Activated T-helper 2 cell treated with anti-CD3 and anti-CD28 coated beads, Interferon-gamma antibody, Interleukin-2, Interleukin-4, amounts not matched to agents 10 μg/mL and 5 μg/mL and 100 μg/mL, durations not matched to agents 14 hours and 24 hours and 36 hours (primary cell): ENCODE measurements at regions of chr5 and their contacts with region 1.

Region 1: DNA sequence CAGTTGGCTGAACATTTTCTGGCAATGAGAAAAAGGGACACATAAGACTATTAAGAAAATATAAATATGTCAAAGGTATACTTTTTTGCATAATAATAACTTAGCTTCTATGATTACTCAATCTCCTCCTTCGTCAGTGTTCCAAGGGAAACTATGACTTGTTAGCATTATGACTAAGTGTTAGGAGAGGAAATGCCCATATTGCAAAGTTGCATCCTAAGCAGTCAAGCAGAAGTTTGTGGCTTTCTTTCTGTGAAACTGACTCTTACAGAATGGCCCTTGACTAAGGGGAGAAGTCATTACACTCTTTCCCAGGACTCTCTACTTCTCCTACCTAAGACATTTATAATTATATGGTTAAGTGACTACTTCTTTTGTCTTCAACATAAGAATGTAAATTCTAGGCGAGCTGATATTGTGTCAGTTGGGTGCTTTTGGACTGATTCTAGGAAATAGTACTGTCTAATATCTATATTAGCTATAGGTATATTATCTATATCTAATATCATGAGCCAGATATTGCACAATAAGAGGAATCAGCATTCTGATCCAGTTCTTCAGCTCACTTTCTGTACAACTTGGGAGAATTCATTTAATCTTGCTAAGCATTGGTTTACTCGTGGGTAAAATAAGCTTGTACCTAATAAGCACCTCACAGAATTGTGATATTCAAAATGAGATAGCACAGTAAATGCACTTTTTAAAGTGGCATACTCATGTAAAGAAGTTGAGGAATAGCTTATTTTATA is 16.4 kb upstream of the SPINK6 start:
- DNase-seq: no peak
- H3K4me3 Mint-ChIP-seq: no peak overlapping the region
- H3K27ac Mint-ChIP-seq: no peak overlapping the region
- H3K4me1 Mint-ChIP-seq: peaks cover 11% of the 10 kb centered on the region
- H3K27me3 Mint-ChIP-seq: peaks cover 3% of the 10 kb centered on the region

Region 2: GRCh38 chr5:147617191-147617606 is 569.2 kb before region 1 on chr5:
- intact Hi-C with region 1: no loop called
- DNase-seq: no peak
- H3K4me3 Mint-ChIP-seq: no peak overlapping the region
- H3K27ac Mint-ChIP-seq: no peak overlapping the region
- H3K4me1 Mint-ChIP-seq: no peaks in the 10 kb centered on the region
- H3K27me3 Mint-ChIP-seq: no peaks in the 10 kb centered on the region

Region 3: DNA sequence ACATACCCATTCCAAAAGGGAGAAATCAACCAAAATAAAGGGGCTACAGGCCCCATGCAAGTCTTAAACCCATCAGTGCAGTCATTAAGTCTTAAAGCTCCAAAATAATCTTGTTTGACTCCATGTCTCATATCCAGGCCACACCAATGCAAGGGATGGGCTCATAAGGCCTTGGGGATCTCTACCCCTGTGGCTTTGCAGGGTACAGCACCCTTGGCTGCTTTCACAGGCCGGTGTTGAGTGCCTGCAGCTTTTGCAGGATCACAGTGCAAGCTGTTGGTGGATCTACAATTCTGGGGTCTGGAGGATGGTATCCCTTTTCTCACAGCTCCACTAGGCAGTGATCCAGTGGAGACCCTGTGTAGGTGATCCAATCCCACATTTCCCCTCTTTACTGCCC is 23.1 kb before region 1 on chr5:
- intact Hi-C with region 1: no loop called
- DNase-seq: no peak
- H3K4me3 Mint-ChIP-seq: no peak overlapping the region
- H3K27ac Mint-ChIP-seq: no peak overlapping the region
- H3K4me1 Mint-ChIP-seq: no peaks in the 10 kb centered on the region
- H3K27me3 Mint-ChIP-seq: peaks cover 2% of the 10 kb centered on the region

Region 4: GRCh38 chr5:148708854-148709253 is 522.4 kb after region 1 on chr5:
- intact Hi-C with region 1: loop called (anchors 1 kb)
- DNase-seq: no peak
- H3K4me3 Mint-ChIP-seq: no peak overlapping the region
- H3K27ac Mint-ChIP-seq: peak overlapping the region; percentile 68
- H3K4me1 Mint-ChIP-seq: peaks cover 33% of the 10 kb centered on the region
- H3K27me3 Mint-ChIP-seq: peaks cover 5% of the 10 kb centered on the region

Region 5: DNA sequence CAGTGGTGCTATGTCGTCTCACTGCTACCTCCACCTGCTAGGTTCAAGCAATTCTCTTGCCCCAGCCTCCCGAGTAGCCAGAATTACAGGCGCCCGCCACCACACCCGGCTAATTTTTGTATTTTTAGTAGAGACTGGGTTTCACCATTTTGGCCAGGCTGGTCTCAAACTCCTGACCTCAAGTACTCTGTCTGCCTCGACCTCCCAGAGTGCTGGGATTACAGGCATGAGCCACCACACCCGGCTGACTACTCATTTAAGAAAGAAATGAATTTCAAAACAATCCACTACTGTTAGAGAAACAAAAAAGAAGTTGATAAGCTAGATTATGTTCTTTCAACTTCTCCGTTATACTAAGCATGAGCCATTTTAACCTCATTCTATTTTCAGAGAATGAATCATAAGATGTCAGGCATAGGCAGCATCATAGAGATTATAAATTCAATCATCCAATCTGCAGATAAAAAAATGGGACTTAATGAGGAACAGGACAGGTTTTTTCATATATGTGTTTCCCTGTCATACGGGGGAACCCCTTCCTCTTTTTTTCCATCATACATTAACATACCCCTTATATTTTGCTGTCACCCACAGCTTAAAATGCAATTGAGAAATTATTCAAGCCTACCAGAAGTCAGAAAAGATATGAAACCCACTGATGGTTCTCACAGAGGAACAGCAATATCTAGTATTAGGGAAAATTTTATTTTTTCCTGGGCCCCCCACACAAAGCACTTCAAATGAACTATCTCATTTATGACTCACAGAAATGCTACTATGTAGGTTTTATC is 613.5 kb after region 1 on chr5:
- intact Hi-C with region 1: loop called (anchors 5 kb)
- DNase-seq: no peak
- H3K4me3 Mint-ChIP-seq: no peak overlapping the region
- H3K27ac Mint-ChIP-seq: peak overlapping the region; percentile 78
- H3K4me1 Mint-ChIP-seq: peaks cover 29% of the 10 kb centered on the region
- H3K27me3 Mint-ChIP-seq: peaks cover 3% of the 10 kb centered on the region